ENCODE measurements at regions of chr4 and their contacts with region 1.

Region 1: GRCh38 chr4:77036206-77036605 is 39.6 kb downstream of the CCNI start:
- DNase-seq: no peak
- H3K4me3 ChIP-seq: no peak overlapping the region
- H3K27ac ChIP-seq: no peak overlapping the region
- H3K4me1 ChIP-seq: peaks cover 0 to 9% (median 0%) of the 10 kb centered on the region in 3 donors
- H3K27me3 ChIP-seq: no peaks in the 10 kb centered on the region
- CTCF ChIP-seq: no peak
- POLR2A ChIP-seq: no peak

Region 2: DNA sequence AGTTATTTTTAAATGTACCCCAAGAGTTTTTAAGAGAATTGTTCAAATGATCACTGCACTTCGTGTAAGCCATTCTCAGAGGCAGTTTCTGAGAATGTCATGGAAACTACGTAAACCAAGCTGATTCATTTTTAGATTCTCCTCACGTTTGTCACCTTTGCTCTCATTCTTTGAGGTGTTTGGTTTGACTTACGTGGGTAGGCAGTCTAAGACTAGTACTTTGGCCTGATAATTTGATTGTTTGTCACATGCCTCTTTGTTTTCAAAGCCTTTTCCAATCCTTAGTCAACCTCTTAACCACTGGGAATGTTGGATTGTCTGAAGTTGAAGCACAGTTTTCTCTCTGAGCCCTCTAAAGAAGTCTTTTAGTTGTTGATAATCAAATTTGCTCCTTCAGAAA is 76.2 kb before region 1 on chr4:
- intact Hi-C with region 1: loop called (anchors 10 kb)
- DNase-seq: no peak
- H3K4me3 ChIP-seq: no peak overlapping the region
- H3K27ac ChIP-seq: no peak overlapping the region
- H3K4me1 ChIP-seq: peaks cover 0 to 17% (median 0%) of the 10 kb centered on the region in 3 donors
- H3K27me3 ChIP-seq: no peaks in the 10 kb centered on the region
- CTCF ChIP-seq: no peak
- POLR2A ChIP-seq: no peak

Measured in esophagus squamous epithelium (tissue), 5 donors.